ENCODE measurements at regions of chr1 and their contacts with region 1.

Region 1: DNA sequence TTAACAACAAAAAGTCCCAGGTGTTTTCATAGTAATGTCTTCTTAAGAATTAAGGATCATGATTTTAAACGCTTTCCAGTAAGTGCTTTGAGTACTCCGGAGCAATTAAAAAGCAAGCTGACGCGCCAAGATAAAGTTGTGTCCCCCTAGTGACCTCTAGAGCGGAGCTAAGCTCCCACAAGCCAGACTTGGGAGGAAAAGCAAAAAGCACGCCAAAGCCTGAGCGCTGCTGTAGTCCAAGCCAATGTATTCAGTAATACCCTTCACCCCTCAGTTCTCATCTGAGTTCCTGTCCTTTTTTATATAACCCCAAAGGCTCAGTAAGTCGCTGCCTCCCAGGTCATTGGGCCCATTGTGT is 3.5 kb upstream of the SLC44A5 start:
- DNase-seq: peak; percentile 4
- CTCF ChIP-seq: no peak

Region 2: DNA sequence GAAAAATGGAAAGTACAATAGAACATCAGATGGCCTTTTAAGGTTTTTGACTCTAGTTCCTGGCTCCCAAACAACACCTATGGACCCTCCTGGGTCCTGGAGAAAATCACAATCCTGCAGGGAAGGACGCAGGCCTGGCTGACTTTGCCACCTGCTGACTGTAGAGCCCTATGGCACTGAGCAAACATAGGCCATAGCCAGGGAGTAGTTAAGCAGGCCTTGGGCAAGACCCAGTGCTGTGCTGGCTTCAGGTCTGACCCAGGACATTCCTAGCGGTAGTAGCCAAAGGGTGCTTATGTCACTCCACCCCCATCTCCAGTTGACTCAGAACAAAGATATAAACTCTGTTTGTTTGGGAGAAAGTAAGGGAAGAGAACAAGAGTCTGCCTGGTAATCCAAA is 152.5 kb before region 1 on chr1:
- CTCF ChIA-PET with region 1: no interaction called
- POLR2A ChIA-PET with region 1: no interaction called
- DNase-seq: no peak
- CTCF ChIP-seq: no peak

Region 3: GRCh38 chr1:75559136-75559535 is 55.2 kb before region 1 on chr1:
- CTCF ChIA-PET with region 1: no interaction called
- POLR2A ChIA-PET with region 1: no interaction called
- DNase-seq: no peak
- CTCF ChIP-seq: no peak

Region 4: DNA sequence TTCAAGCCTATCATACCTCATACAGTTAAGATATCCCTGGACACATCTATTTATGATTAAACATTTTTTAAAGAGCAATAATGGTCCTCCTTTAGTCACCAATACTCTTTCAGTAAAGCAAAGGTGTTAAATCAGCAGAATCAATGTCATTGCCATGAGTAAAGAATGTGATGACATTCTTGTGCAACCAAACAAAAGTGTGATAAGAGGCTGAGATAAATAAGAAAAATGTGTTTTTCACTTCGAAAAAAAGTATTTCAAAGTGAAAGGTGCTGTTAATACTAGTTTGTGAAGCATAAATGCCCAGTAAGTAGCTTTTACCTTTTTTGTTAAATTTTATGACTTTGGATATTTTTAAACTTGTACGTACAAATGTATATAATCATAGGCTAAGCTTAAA is 11.9 kb before region 1 on chr1:
- CTCF ChIA-PET with region 1: interaction called, 10 read pairs
- POLR2A ChIA-PET with region 1: no interaction called
- DNase-seq: no peak
- CTCF ChIP-seq: no peak

Region 5: DNA sequence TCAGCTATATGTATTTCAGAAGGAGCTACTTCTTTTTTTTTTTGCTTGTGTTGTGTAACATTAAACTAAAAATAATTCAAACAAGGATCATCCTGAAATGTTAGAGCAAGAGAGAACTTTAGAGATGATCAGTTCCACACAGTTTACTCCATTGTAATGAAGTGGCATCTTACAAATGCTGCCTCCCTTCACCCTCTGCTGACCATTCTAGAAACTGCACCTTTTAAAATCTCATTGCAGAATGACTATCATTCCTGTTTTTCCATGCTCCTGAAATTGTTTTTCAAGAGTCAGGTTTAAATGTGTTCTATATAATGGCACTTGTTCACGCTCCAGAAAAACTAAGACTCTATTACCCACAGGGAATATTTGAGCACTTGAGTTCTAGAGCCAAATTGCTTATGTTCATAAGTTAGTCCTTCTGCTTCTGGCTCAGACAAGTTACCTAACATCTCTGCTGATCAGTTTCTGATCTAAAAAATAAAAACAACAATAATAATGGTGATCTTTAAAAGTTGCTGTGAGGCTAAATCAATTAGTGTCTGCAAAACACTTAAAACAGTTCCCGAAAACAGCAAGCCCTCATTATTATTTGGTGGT is 18.1 kb after region 1 on chr1:
- CTCF ChIA-PET with region 1: interaction called, 17 read pairs
- POLR2A ChIA-PET with region 1: no interaction called
- DNase-seq: peak; percentile 15
- CTCF ChIP-seq: peak; percentile 73

Region 6: DNA sequence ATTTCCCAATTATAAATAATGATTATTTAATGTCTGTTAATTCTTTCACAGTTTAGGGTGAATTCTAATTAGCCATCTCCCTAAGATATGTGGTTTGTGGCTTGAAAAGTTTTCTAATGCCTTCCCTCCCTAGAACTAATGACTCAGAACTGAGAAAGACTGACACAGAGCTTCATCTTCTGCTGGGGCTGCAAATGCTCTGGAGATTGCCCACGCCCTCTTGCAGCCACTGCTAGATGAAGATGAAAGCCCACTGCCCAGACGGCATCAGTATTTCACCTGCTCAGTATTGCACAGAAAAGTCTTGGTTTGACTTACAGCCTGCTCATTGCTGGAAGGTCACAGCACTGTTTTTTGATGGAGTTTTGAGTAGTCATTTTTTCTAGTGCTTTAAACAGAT is 561.6 kb after region 1 on chr1:
- CTCF ChIA-PET with region 1: no interaction called
- POLR2A ChIA-PET with region 1: no interaction called
- DNase-seq: no peak
- CTCF ChIP-seq: no peak